Right ventricle myocardium superior (tissue), 1 donor: ENCODE measurements at regions of chr4 and their contacts with region 1.

Region 1: DNA sequence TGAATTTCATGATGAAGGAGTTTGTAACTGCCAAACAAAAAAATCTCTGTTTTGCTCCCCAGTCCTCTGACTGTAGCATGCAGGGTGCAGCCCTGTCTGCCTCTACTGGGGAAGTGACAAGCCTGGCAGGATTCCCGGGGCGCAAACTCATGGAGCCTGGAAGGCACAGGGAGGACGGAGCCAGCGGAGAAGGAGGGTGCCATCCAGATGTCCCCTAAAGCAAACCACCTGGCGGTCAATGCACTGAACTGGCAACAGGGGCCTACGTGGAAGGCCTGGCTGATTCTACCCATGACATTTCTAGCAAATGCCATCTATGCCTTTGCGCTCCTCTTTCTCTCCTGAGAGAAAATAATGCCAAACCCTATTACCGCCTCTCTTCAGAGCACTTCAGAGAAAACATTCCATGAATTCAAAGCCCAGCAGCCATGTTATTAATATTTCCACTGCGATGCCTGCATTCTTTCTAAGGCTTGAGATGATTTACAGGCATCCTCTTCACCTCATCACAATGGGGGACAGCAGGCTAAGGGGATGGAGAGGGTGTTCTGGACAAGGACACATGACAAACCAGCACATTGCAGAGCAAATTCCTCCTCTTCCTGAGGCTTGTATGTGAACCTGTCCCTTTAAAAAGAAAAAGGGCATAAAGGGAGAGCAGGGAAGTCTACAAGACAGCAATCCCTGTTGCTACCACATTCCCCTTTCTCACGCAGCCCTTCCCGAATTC is 329.3 kb upstream of the NOCT start:
- DNase-seq: peak; percentile 78
- ATAC-seq: peak; percentile 73

Region 2: DNA sequence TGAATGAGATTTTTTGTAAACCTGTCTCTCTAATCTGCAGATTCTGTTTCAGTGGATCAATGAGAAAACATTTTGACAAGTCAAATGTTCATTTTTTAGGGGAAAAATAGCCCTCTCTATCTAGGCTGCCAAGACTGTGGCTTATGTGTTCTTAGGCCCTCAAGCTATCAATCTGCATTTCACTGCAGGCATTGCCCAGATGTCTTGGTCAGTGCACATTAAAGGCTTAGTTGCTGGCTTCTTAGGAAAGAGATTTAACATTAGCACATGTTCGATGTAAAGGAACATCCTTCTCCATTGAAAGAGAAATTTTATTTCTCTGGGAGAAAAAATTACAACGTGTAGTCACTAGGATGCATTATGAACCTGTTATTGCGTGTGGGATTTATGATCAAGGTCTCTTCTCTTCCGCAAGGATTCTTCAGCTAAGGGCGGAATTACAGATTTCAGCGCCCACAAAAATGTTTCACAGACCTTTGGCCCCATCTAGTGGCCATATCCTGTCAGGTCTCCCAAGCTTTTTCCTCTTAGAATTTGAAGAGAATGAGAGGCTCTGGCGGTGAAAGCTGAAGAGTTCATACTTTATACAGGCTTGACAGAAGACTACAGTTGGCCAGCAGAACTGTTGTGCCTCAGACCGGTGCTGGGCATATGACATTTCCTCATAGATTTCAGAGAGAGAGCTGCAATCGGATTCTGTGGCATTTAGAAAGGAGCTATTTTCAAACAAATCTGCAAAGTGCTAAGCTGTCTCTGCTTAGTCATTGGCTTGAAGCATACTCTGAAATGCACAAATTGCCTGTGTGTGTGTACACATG is 184.7 kb after region 1 on chr4:
- intact Hi-C with region 1: loop called (anchors 5 kb)
- DNase-seq: no peak
- ATAC-seq: peak; percentile 83